ENCODE measurements at regions of chr12 and their contacts with region 1.

Region 1: DNA sequence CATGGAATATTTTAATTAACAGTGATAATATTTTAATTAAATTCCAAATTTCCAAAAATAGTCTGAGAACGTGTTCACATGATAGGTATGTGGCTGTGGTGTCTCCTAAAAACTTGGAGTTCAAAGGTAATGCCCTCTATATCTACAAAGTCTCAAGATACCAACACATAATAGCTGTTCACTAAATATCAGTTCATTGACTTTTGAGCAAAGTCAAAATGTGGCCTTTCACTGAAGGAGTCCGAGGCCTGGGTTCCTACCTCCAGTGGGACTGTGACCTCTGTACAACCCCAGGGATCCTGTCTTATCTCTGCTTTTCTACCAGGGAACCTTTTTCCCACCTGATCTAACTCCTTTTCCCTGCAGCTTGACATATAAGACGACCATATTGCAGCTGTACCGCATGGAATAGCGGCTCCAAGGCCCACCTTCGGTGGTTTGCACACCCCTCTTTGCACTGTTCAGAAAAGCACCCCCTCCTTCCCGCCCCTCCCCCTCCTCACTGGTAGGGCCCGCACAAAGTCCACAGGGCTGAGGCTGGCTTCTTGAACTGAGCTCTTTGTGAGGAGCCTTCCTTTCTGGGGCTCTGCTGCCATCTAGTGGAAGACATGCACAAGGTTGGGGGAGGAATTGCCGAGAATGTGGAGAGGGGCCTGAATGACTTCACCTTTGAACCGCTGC is 3.1 kb downstream of the CCND2 start:
- DNase-seq: peak; percentile 72 to 90 (median 76)
- H3K4me3 ChIP-seq: no peak overlapping the region
- H3K4me3 Mint-ChIP-seq: peak overlapping the region; percentile 39 to 42
- H3K27ac ChIP-seq: no peak overlapping the region
- H3K27ac Mint-ChIP-seq: peak overlapping the region in 1 of 7 donors; percentile 75
- H3K4me1 ChIP-seq: peaks cover 53 to 78% of the 10 kb centered on the region in 2 donors
- H3K4me1 Mint-ChIP-seq: peaks cover 59% of the 10 kb centered on the region
- H3K27me3 ChIP-seq: peaks cover 4 to 28% of the 10 kb centered on the region in 2 donors
- H3K27me3 Mint-ChIP-seq: peaks cover 17 to 46% (median 35%) of the 10 kb centered on the region in 3 donors
- CTCF ChIP-seq: peak; percentile 89

Region 2: DNA sequence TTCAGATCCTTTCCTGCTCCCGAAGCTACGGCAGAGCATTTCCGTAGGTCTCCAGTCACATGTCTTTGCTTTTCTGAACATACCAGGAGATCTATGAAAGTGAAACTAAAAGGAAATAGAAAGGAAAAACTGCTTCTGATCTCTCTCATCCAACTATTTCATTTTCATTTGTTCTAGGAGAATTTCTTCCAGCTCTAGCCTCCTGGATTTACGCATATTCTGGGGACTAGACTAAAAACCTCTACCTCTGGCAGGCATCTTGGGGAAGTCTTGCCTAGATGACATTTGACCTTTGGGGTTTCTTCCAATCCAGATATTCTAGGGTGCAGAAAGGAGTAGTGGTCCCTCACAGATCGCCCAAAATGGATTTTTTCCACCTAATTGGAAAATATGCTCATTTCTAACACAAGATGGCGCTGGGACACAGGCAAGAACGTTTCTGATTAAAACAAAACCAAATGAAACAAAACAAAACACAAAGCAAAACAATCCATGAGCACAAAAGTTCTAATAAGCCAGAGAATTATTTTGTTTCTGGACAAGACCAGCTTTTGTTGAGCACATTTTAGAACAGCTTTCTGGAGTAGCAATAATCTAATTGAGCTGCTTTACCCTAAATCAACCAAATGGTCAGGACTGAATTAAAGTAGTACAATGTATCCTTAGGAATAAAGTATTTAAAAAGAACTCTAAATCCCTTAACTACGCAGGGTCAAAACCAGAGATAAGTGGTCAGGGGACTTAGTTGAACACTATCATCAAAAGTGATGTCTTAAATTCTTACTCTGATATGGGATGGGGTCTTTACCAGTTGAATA is 391.2 kb before region 1 on chr12:
- intact Hi-C with region 1: loop called (anchors 2 to 5 kb)
- DNase-seq: peak; percentile 34 to 50 (median 45)
- H3K4me3 ChIP-seq: no peak overlapping the region
- H3K4me3 Mint-ChIP-seq: peak overlapping the region in 1 of 2 donors; percentile 46
- H3K27ac ChIP-seq: no peak overlapping the region
- H3K27ac Mint-ChIP-seq: peak overlapping the region in 2 of 7 donors; percentile 34 to 37
- H3K4me1 ChIP-seq: peaks cover 6 to 13% of the 10 kb centered on the region in 2 donors
- H3K4me1 Mint-ChIP-seq: peaks cover 15% of the 10 kb centered on the region
- H3K27me3 ChIP-seq: no peaks in the 10 kb centered on the region
- H3K27me3 Mint-ChIP-seq: peaks cover 0 to 6% (median 0%) of the 10 kb centered on the region in 3 donors
- CTCF ChIP-seq: peak; percentile 89

Region 3: DNA sequence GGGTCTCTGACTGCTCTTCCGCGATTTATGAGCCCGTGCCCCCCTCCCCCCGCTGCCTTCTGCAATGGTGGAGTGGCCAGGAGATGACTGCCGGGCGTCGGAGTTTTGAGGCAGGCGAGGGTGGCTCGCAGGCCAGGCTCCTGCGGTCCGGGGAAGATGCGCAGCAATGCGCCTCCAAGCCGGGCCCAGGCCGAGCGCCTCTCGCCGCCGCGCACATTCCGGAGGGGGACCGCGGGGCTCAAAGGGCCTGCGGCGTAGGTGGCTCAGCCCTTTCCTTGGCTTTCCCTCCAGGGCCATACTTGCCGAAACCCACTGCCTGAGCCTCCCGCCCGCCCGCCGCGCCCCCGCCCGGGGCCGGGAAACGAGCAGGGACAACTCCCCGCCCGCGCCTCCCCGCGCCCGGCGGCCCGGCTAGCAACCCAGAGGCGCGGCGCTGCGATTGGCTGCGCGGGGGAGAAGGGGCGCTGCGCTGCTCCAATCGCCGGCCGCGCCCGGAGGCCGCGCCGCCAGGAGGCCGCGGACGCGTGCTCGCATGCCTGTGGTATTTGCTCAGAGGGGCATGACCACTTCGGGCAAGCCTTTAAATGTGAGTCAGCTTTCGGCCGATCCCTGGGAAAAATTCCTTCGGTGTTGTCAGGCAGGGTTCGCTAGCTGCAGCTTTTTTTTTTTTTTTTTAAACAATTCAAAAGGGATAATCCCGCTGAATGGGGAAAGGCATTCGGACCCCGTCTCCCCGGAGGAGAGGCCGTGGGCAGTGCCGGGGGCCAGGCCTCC is 245.5 kb before region 1 on chr12:
- intact Hi-C with region 1: loop called in 1 of 2 experiments (anchors 5 kb)
- DNase-seq: peak; percentile 60 to 93 (median 73)
- H3K4me3 ChIP-seq: peak overlapping the region; percentile 18 to 62 (median 25)
- H3K4me3 Mint-ChIP-seq: peak overlapping the region; percentile 67 to 86
- H3K27ac ChIP-seq: no peak overlapping the region
- H3K27ac Mint-ChIP-seq: no peak overlapping the region
- H3K4me1 ChIP-seq: peaks cover 13 to 24% of the 10 kb centered on the region in 2 donors
- H3K4me1 Mint-ChIP-seq: peaks cover 19% of the 10 kb centered on the region
- H3K27me3 ChIP-seq: peaks cover 7 to 14% of the 10 kb centered on the region in 2 donors
- H3K27me3 Mint-ChIP-seq: peaks cover 12 to 32% (median 21%) of the 10 kb centered on the region in 3 donors
- CTCF ChIP-seq: no peak

Region 4: GRCh38 chr12:4118017-4118510 is 158.6 kb before region 1 on chr12:
- intact Hi-C with region 1: loop called in 1 of 2 experiments (anchors 5 kb)
- DNase-seq: peak; percentile 82 to 91 (median 86)
- H3K4me3 ChIP-seq: peak overlapping the region in 1 of 3 experiments; percentile 43
- H3K4me3 Mint-ChIP-seq: peak overlapping the region; percentile 62 to 80
- H3K27ac ChIP-seq: peak overlapping the region in 1 of 2 donors; percentile 18
- H3K27ac Mint-ChIP-seq: peak overlapping the region; percentile 51 to 87 (median 78)
- H3K4me1 ChIP-seq: peaks cover 33 to 35% of the 10 kb centered on the region in 2 donors
- H3K4me1 Mint-ChIP-seq: peaks cover 54% of the 10 kb centered on the region
- H3K27me3 ChIP-seq: peaks cover 12 to 14% of the 10 kb centered on the region in 2 donors
- H3K27me3 Mint-ChIP-seq: peaks cover 27 to 40% (median 32%) of the 10 kb centered on the region in 3 donors
- CTCF ChIP-seq: no peak

Region 5: GRCh38 chr12:4215229-4216186 is 61.2 kb before region 1 on chr12:
- intact Hi-C with region 1: loop called in 1 of 2 experiments (anchors 5 kb)
- DNase-seq: peak; percentile 96 to 97 (median 97)
- H3K4me3 ChIP-seq: peak overlapping the region; percentile 24 to 69 (median 28)
- H3K4me3 Mint-ChIP-seq: peak overlapping the region; percentile 71 to 89
- H3K27ac ChIP-seq: peak overlapping the region; percentile 83 to 97
- H3K27ac Mint-ChIP-seq: peak overlapping the region; percentile 96 to 99 (median 99)
- H3K4me1 ChIP-seq: peaks cover 56 to 58% of the 10 kb centered on the region in 2 donors
- H3K4me1 Mint-ChIP-seq: peaks cover 63% of the 10 kb centered on the region
- H3K27me3 ChIP-seq: no peaks in the 10 kb centered on the region
- H3K27me3 Mint-ChIP-seq: peaks cover 0 to 4% (median 2%) of the 10 kb centered on the region in 3 donors
- CTCF ChIP-seq: no peak